ENCODE measurements at regions of chr20 and their contacts with region 1.

Region 1: DNA sequence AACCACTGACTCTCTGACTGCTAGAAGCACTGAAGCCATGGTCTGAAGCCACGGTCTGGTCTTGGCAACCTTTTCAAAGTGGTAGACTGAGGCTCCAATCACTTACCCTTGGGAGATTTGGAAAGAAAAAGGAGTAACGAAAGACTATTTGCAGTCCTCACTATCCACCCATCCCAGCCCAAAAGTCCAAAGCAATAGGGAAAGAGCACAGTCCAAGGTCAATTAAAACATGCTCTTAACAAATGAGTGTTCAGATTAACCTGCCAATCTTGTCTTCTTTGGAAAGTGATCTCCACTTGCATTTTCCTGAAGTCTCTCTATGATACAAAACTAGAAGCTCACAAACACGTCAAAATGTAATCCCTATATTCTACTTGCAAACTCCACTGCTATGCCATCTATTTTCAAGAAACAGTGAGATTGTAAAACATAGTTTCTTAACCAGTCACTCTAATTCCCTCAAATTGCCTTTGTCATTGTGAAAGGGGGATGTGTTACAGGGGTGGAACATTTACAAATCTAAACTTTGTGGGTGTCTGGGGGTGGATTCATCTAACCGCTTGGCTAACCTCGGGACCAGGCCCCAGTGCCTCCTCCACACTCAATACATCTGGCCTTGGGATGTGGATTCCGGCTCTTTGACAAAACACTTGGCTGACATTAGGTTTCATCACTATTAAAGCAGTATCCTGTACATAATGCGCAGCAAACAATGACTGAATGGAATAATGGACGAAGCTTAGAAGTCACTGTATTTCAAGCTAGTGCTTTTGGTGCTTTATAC is 56.4 kb downstream of the B4GALT5 start:
- DNase-seq: no peak
- CTCF ChIP-seq: no peak

Region 2: GRCh38 chr20:49668181-49668877 is 11.0 kb after region 1 on chr20:
- CTCF ChIA-PET with region 1: interaction called, 11 read pairs
- POLR2A ChIA-PET with region 1: no interaction called
- DNase-seq: peak; percentile 88
- CTCF ChIP-seq: no peak

Region 3: DNA sequence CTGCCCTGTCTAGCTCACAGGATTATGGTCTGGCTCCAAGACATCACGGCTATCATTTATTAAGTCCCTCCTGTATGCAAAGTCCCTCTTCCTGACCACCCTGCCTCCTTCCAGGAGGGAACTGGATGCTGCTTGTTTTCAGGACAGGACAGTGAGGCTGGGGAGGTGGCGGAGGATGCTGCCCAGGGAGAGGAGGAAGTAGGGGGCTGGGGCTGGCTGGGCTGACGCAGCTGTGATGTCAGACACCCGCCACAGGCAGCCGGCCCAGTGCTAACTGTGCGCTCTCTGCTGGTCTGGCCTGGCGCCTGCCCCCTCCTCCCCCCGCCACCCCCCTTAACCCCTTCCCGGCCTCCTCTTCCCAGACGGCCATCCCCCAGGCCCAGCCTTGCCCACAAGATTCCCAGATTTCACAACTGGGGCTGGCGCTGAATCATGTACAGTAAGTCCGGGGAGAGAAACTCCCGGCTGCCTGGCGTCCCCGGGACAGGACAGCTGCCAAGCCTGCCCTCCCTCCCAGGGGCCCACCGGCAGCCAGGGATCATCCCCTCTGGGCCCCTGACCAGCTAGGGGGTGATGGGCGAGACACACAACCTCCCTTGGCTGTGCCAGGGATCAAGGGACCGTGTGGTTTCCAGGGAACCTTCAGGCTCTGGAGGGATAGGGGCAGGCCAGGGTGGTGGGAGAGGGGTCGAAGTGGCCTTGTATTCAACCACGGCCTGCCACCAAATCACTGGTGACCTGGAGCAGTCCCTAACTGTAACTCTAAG is 651.4 kb after region 1 on chr20:
- CTCF ChIA-PET with region 1: no interaction called
- POLR2A ChIA-PET with region 1: no interaction called
- DNase-seq: no peak
- CTCF ChIP-seq: no peak